Naive thymus-derived CD4-positive, alpha-beta T cell (primary cell): ENCODE measurements at regions of chr17 and their contacts with region 1.

Region 1: GRCh38 chr17:28041068-28041843 is 1.2 kb upstream of the NLK start:
- DNase-seq: peak; percentile 94 to 99 (median 99)
- ATAC-seq: peak; percentile 96
- H3K4me3 ChIP-seq: peak overlapping the region; percentile 45
- H3K4me3 Mint-ChIP-seq: peak overlapping the region; percentile 82 to 92 (median 88)
- H3K27ac ChIP-seq: peak overlapping the region; percentile 71
- H3K27ac Mint-ChIP-seq: peak overlapping the region; percentile 75 to 93 (median 88)
- H3K4me1 ChIP-seq: peaks cover 28 to 40% of the 10 kb centered on the region in 2 donors
- H3K4me1 Mint-ChIP-seq: peaks cover 35 to 65% (median 60%) of the 10 kb centered on the region in 7 donors
- H3K27me3 ChIP-seq: no peaks in the 10 kb centered on the region
- H3K27me3 Mint-ChIP-seq: peaks cover 0 to 16% (median 0%) of the 10 kb centered on the region in 5 donors

Region 2: DNA sequence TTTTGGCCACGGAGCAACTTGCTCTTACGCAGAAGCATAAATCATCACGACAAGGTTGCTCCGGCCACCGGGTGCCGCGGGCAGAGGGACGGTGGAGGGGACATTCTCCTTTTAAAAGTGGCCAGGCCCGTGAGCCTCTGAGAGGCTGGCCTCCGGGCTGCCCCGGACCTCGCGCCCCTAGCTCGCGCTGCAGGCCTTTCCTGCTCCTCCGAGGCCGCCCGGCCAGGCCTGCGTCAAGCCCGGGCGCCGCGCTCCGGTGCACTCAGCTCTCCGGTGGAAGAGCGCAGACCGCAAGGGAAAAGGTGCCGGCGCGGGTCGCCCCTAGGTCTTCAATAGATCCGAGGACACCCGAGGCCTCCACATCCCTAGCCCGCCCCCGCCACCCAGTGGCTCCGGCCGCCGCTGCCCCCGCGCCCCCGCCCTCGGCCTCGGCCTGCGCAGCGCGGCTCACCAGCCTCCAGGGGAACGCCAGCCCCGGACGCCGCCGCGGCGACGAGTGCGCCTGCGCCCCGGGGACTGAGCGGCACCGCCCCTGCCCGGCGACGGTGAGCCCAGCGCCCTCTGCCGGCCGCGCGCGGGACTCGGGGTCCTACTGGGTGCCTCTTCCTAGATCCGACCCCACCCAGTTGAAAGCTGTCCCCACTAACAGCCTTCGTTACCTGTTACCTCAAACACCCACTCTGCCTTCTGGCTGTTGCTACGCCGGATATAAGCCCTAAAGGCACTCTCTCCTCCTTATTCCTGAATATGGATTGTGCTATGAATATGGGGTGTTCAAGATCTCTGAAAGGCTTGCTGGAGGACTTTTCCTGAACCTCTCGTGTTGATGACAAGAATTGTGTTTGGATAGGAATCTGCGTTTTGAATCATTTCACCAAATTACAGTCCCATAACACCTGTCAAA is 148.1 kb before region 1 on chr17 and contains the start of gene LYRM9:
- CTCF ChIA-PET with region 1: no interaction called
- POLR2A ChIA-PET with region 1: no interaction called
- intact Hi-C with region 1: loop called (anchors 1 kb)
- DNase-seq: peak; percentile 87 to 99 (median 93)
- ATAC-seq: peak; percentile 100
- H3K4me3 ChIP-seq: peak within 1 kb of the TSS; percentile 80
- H3K4me3 Mint-ChIP-seq: peak within 1 kb of the TSS; percentile 76 to 95 (median 88)
- H3K27ac ChIP-seq: peak within 1 kb of the TSS; percentile 73
- H3K27ac Mint-ChIP-seq: peak within 1 kb of the TSS; percentile 69 to 89 (median 84)
- H3K4me1 ChIP-seq: peaks cover 0 to 13% of the 10 kb centered on the region in 2 donors
- H3K4me1 Mint-ChIP-seq: peaks cover 15 to 29% (median 26%) of the 10 kb centered on the region in 7 donors
- H3K27me3 ChIP-seq: no peaks in the 10 kb centered on the region
- H3K27me3 Mint-ChIP-seq: peaks cover 15 to 45% (median 19%) of the 10 kb centered on the region in 5 donors
- total RNA-seq, gene LYRM9: 4.2 to 24.5 (median 14.0) TPM

Region 3: DNA sequence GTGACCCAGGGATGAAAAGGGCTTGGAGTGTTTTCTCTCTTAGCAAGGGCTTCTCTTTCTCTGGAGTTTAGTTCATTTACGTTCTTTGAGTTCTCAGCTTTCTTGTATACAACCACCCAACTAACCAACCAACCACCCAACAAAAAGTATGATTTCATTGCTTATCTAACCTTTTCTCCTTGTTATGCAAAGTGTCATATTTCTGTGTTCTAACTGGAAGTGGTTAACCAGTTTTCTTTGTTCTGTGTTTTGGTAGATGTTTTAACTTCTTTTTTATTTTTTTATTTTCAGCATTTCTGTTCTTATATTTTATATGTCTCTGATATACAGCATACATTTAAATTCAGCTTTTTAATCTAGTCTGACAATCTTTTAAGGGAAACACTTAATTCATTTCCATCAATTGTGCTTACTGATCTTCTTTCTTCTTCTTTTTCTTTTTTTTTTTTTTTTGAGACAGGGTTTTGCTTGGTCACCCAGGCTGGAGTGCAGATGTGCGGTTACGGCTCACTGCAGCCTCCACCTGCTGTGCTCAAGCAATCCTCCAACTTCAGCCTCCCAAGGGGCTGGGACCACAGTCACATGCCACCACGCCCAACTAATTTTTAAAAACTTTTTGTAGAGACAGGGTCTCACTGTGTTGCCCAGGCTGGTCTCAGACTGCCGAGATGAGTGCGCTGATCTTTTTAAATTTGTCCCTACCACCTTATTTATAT is 30.8 kb after region 1 on chr17:
- CTCF ChIA-PET with region 1: no interaction called
- POLR2A ChIA-PET with region 1: interaction called, 3 read pairs
- intact Hi-C with region 1: loop called in 1 of 2 experiments (anchors 1 kb)
- DNase-seq: peak in 7 of 9 donors; percentile 27 to 75 (median 60)
- ATAC-seq: peak; percentile 82
- H3K4me3 ChIP-seq: no peak overlapping the region
- H3K4me3 Mint-ChIP-seq: peak overlapping the region in 9 of 10 donors; percentile 5 to 73 (median 30)
- H3K27ac ChIP-seq: no peak overlapping the region
- H3K27ac Mint-ChIP-seq: peak overlapping the region; percentile 31 to 94 (median 76)
- H3K4me1 ChIP-seq: peaks cover 8 to 19% of the 10 kb centered on the region in 2 donors
- H3K4me1 Mint-ChIP-seq: peaks cover 34 to 75% (median 65%) of the 10 kb centered on the region in 7 donors
- H3K27me3 ChIP-seq: no peaks in the 10 kb centered on the region
- H3K27me3 Mint-ChIP-seq: no peaks in the 10 kb centered on the region

Region 4: DNA sequence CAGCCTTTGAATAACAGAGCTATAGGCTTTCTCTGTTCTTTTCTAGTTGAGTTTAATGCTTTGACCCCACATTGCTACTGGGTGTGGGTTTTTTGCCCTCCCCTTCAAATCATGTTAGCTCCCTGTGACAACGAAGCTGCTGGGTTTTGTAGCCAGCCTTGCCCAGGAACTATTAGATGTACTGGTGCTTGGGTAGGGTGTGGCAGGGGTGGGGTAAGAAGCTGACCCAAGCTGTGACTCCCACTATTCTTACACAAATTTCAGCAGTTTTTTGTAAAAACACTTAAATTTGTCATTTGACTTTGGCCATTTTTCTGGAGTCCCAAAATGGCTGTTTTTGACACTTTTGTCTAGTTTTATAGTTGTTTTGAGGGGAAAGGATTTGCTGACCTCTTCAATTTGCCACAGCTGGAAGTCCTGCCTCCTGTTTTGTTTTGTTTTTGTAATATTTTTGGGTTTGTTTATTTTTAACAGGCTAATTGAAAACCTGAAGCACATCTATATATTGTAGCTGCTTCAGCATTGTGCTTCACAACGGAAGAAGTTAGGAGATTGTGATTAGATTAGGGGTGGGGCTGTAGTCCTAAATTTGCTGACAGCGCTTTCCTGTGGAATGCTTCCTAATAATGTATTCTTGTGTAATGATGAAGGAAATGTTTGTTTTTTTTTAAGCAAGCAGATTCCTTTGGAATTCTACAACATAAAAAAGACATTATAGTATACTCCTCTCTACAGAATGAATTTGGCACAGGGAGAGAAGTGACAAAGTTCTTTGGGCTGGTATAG is 71.2 kb after region 1 on chr17:
- CTCF ChIA-PET with region 1: no interaction called
- POLR2A ChIA-PET with region 1: interaction called, 5 read pairs
- intact Hi-C with region 1: loop called (anchors 5 kb)
- DNase-seq: no peak
- ATAC-seq: no peak
- H3K4me3 ChIP-seq: no peak overlapping the region
- H3K4me3 Mint-ChIP-seq: no peak overlapping the region
- H3K27ac ChIP-seq: no peak overlapping the region
- H3K27ac Mint-ChIP-seq: no peak overlapping the region
- H3K4me1 ChIP-seq: peaks cover 0 to 8% of the 10 kb centered on the region in 2 donors
- H3K4me1 Mint-ChIP-seq: peaks cover 12 to 40% (median 24%) of the 10 kb centered on the region in 7 donors
- H3K27me3 ChIP-seq: no peaks in the 10 kb centered on the region
- H3K27me3 Mint-ChIP-seq: no peaks in the 10 kb centered on the region

Region 5: GRCh38 chr17:28118362-28118761 is 77.1 kb after region 1 on chr17:
- CTCF ChIA-PET with region 1: interaction called, 4 read pairs
- POLR2A ChIA-PET with region 1: no interaction called
- intact Hi-C with region 1: loop called (anchors 5 kb)
- DNase-seq: no peak
- ATAC-seq: no peak
- H3K4me3 ChIP-seq: peak overlapping the region; percentile 1
- H3K4me3 Mint-ChIP-seq: peak overlapping the region in 7 of 10 donors; percentile 3 to 71 (median 42)
- H3K27ac ChIP-seq: no peak overlapping the region
- H3K27ac Mint-ChIP-seq: peak overlapping the region in 5 of 9 donors; percentile 32 to 80 (median 47)
- H3K4me1 ChIP-seq: peaks cover 5 to 11% of the 10 kb centered on the region in 2 donors
- H3K4me1 Mint-ChIP-seq: peaks cover 10 to 51% (median 33%) of the 10 kb centered on the region in 7 donors
- H3K27me3 ChIP-seq: no peaks in the 10 kb centered on the region
- H3K27me3 Mint-ChIP-seq: no peaks in the 10 kb centered on the region

Region 6: GRCh38 chr17:28318759-28319660 is 277.8 kb after region 1 on chr17 and contains the start of gene TMEM97:
- CTCF ChIA-PET with region 1: no interaction called
- POLR2A ChIA-PET with region 1: no interaction called
- intact Hi-C with region 1: loop called (anchors 1 kb)
- DNase-seq: peak; percentile 83 to 95 (median 93)
- ATAC-seq: peak; percentile 99
- H3K4me3 ChIP-seq: peak within 1 kb of the TSS; percentile 69
- H3K4me3 Mint-ChIP-seq: peak within 1 kb of the TSS; percentile 77 to 97 (median 91)
- H3K27ac ChIP-seq: peak within 1 kb of the TSS; percentile 64
- H3K27ac Mint-ChIP-seq: peak within 1 kb of the TSS; percentile 37 to 90 (median 80)
- H3K4me1 ChIP-seq: peaks cover 11 to 12% of the 10 kb centered on the region in 2 donors
- H3K4me1 Mint-ChIP-seq: peaks cover 9 to 40% (median 21%) of the 10 kb centered on the region in 7 donors
- H3K27me3 ChIP-seq: no peaks in the 10 kb centered on the region
- H3K27me3 Mint-ChIP-seq: no peaks in the 10 kb centered on the region
- total RNA-seq, gene TMEM97: 2.9 to 19.9 (median 4.8) TPM

Region 7: DNA sequence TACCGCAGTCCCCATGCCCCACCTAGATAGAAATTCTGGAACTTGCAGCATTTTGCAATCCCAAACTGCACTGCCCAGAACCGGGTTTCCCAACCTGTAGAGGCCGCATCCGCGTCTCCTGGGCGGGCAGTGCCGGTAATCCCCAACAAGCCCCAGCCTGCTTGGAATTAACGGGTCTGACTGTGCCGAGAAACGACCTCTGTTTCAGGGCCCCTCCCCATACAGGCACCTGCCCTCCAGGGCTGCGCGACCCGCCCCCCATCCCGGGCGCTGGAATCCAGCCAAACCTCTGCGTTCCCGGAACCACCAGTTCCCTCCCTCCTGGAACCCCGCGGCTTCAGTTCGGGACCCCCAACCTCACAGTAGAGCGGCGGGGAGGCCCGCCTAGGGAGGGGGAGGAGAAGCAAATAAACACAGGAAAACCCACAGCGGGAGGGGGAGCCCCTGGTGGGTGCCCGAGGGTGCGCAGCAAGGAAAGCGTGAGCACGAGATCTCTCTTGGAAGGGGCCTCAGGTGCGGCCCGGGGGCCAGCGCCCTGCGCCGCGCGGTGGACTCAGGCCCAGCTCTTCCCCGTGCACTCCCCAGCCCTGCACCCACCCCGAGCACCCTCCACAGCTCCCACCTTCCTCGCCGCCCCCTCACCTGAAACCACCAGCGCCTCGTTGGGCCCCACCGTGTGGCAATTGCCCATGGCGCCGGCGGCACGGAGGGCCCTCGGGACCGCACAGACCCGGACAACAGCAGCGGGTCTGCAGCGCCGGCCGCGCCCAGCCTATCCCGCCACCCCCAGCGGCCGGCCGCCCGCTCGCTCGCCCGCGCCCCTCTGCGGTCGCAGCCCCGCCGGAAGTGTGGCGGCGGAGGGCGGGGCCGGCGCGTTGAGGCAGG is 855.9 kb after region 1 on chr17 and contains the start of gene FLOT2:
- CTCF ChIA-PET with region 1: no interaction called
- POLR2A ChIA-PET with region 1: no interaction called
- intact Hi-C with region 1: no loop called
- DNase-seq: peak; percentile 41 to 77 (median 76)
- ATAC-seq: peak; percentile 84
- H3K4me3 ChIP-seq: peak within 1 kb of the TSS; percentile 82
- H3K4me3 Mint-ChIP-seq: peak within 1 kb of the TSS; percentile 86 to 98 (median 96)
- H3K27ac ChIP-seq: peak within 1 kb of the TSS; percentile 96
- H3K27ac Mint-ChIP-seq: peak within 1 kb of the TSS; percentile 95 to 99 (median 97)
- H3K4me1 ChIP-seq: peaks cover 43 to 45% of the 10 kb centered on the region in 2 donors
- H3K4me1 Mint-ChIP-seq: peaks cover 32 to 80% (median 64%) of the 10 kb centered on the region in 7 donors
- H3K27me3 ChIP-seq: no peaks in the 10 kb centered on the region
- H3K27me3 Mint-ChIP-seq: no peaks in the 10 kb centered on the region
- total RNA-seq, gene FLOT2: 134 to 252 (median 191) TPM